MCF 10A (cell line): ENCODE measurements at regions of chr3 and their contacts with region 1.

Region 1: GRCh38 chr3:104669083-104669482 is 697.6 kb upstream of the ALCAM start:
- DNase-seq: no peak
- H3K4me3 Mint-ChIP-seq: no peak overlapping the region
- H3K27ac Mint-ChIP-seq: no peak overlapping the region
- H3K4me1 Mint-ChIP-seq: no peaks in the 10 kb centered on the region
- H3K27me3 Mint-ChIP-seq: no peaks in the 10 kb centered on the region
- CTCF ChIP-seq: no peak

Region 2: GRCh38 chr3:104810896-104811295 is 141.8 kb after region 1 on chr3:
- CTCF ChIA-PET with region 1: no interaction called
- POLR2A ChIA-PET with region 1: no interaction called
- intact Hi-C with region 1: loop called (anchors 10 kb)
- DNase-seq: no peak
- H3K4me3 Mint-ChIP-seq: no peak overlapping the region
- H3K27ac Mint-ChIP-seq: no peak overlapping the region
- H3K4me1 Mint-ChIP-seq: no peaks in the 10 kb centered on the region
- H3K27me3 Mint-ChIP-seq: no peaks in the 10 kb centered on the region
- CTCF ChIP-seq: no peak